ENCODE measurements at regions of chr9 and their contacts with region 1.

Region 1: GRCh38 chr9:5886114-5886939 is 4.4 kb upstream of the MLANA start:
- DNase-seq: peak; percentile 60 to 82 (median 63)
- H3K4me3 ChIP-seq: no peak overlapping the region
- H3K4me3 Mint-ChIP-seq: no peak overlapping the region
- H3K27ac ChIP-seq: no peak overlapping the region
- H3K27ac Mint-ChIP-seq: peak overlapping the region in 3 of 8 donors; percentile 47 to 81 (median 75)
- H3K4me1 ChIP-seq: peaks cover 8% of the 10 kb centered on the region
- H3K4me1 Mint-ChIP-seq: peaks cover 7 to 8% (median 8%) of the 10 kb centered on the region in 3 donors
- H3K27me3 ChIP-seq: no peaks in the 10 kb centered on the region
- H3K27me3 Mint-ChIP-seq: no peaks in the 10 kb centered on the region

Region 2: DNA sequence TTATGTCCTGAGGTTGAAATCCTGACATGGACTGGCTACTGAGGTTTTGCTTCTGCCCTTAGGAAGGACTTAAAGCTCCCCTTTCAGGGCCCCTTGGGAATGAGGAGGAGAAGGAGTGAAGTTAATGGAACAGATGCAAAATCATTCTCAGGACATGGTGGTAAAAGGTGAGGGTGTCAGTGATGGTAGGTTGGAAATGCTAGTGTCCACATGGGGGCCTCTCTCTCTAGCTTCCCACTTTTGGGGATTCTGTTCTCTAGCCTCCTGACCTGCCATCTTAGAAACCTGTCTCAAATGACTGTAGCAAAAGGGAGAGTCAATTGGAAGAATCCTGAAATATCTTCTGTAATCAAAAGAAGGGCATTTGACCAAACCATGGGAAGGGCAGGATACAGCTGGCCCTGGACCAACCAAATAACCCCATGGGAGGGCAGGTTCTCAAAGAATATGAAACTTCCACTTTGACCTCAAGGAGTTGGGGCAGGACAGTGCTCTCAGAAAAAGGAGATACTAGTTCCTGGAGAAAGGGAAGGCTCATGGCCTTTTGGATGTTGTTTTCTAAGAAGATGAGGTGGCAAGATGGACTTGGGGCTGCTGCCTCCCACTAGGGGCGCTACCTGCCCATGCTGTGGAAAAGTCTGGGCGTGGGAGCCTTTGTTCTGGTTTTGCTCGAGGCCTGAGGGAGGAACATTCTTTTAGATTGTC is 16.9 kb before region 1 on chr9:
- CTCF ChIA-PET with region 1: interaction called, 15 read pairs
- POLR2A ChIA-PET with region 1: no interaction called
- DNase-seq: no peak
- H3K4me3 ChIP-seq: no peak overlapping the region
- H3K4me3 Mint-ChIP-seq: no peak overlapping the region
- H3K27ac ChIP-seq: no peak overlapping the region
- H3K27ac Mint-ChIP-seq: peak overlapping the region in 2 of 8 donors; percentile 46 to 51
- H3K4me1 ChIP-seq: no peaks in the 10 kb centered on the region
- H3K4me1 Mint-ChIP-seq: peaks cover 10 to 28% (median 13%) of the 10 kb centered on the region in 3 donors
- H3K27me3 ChIP-seq: no peaks in the 10 kb centered on the region
- H3K27me3 Mint-ChIP-seq: no peaks in the 10 kb centered on the region

Region 3: DNA sequence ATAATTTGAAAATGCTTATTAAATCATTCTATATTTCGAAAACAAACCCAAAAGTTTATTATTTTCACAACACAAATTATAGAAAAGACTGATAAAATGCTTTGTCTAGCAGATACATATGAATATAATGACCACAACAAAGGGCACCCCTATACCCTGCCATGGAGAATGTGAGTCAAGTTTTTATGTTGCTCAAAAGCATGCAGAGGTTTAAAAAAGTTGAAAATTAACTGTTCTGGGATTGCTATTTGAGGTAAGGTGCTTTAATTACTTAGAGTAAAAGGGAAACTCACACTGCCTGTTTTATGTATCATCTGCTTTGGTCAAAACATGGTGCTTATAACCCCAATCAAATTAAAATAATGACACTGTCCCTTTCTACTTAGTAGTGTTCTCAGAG is 45.3 kb after region 1 on chr9:
- CTCF ChIA-PET with region 1: no interaction called
- POLR2A ChIA-PET with region 1: no interaction called
- DNase-seq: no peak
- H3K4me3 ChIP-seq: no peak overlapping the region
- H3K4me3 Mint-ChIP-seq: no peak overlapping the region
- H3K27ac ChIP-seq: no peak overlapping the region
- H3K27ac Mint-ChIP-seq: no peak overlapping the region
- H3K4me1 ChIP-seq: no peaks in the 10 kb centered on the region
- H3K4me1 Mint-ChIP-seq: no peaks in the 10 kb centered on the region
- H3K27me3 ChIP-seq: no peaks in the 10 kb centered on the region
- H3K27me3 Mint-ChIP-seq: no peaks in the 10 kb centered on the region

Region 4: GRCh38 chr9:5949103-5949699 is 62.9 kb after region 1 on chr9:
- CTCF ChIA-PET with region 1: no interaction called
- POLR2A ChIA-PET with region 1: no interaction called
- DNase-seq: peak in 4 of 5 donors; percentile 2 to 53 (median 20)
- H3K4me3 ChIP-seq: peak overlapping the region; percentile 16
- H3K4me3 Mint-ChIP-seq: peak overlapping the region; percentile 17 to 84 (median 74)
- H3K27ac ChIP-seq: no peak overlapping the region
- H3K27ac Mint-ChIP-seq: peak overlapping the region; percentile 56 to 89 (median 74)
- H3K4me1 ChIP-seq: peaks cover 9% of the 10 kb centered on the region
- H3K4me1 Mint-ChIP-seq: peaks cover 24 to 32% (median 27%) of the 10 kb centered on the region in 3 donors
- H3K27me3 ChIP-seq: no peaks in the 10 kb centered on the region
- H3K27me3 Mint-ChIP-seq: no peaks in the 10 kb centered on the region

Region 5: DNA sequence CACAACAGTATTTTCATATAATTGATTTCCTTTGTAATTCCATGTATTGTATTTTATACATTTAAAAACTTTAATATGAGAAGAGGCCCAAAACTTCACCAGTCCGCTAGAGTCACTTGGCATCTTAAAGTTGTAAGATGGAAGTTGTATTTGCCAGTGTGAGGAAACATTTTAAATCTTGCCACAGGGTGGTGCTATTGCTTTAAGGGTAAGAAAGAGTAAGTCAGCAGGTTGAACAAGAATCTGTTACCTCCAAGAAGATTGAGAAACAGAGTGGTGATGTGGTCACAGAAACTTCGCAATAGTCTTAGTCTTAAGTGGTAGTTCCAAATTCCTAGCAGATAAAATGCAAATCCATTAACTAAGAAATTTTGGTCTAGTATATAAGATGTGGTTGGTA is 168.9 kb after region 1 on chr9:
- CTCF ChIA-PET with region 1: interaction called, 36 read pairs
- POLR2A ChIA-PET with region 1: no interaction called
- DNase-seq: peak in 2 of 5 donors; percentile 46 to 50
- H3K4me3 ChIP-seq: no peak overlapping the region
- H3K4me3 Mint-ChIP-seq: no peak overlapping the region
- H3K27ac ChIP-seq: no peak overlapping the region
- H3K27ac Mint-ChIP-seq: peak overlapping the region in 1 of 8 donors; percentile 33
- H3K4me1 ChIP-seq: peaks cover 4% of the 10 kb centered on the region
- H3K4me1 Mint-ChIP-seq: peaks cover 0 to 4% (median under 1%) of the 10 kb centered on the region in 3 donors
- H3K27me3 ChIP-seq: no peaks in the 10 kb centered on the region
- H3K27me3 Mint-ChIP-seq: peaks cover 8 to 9% of the 10 kb centered on the region in 2 donors

Region 6: DNA sequence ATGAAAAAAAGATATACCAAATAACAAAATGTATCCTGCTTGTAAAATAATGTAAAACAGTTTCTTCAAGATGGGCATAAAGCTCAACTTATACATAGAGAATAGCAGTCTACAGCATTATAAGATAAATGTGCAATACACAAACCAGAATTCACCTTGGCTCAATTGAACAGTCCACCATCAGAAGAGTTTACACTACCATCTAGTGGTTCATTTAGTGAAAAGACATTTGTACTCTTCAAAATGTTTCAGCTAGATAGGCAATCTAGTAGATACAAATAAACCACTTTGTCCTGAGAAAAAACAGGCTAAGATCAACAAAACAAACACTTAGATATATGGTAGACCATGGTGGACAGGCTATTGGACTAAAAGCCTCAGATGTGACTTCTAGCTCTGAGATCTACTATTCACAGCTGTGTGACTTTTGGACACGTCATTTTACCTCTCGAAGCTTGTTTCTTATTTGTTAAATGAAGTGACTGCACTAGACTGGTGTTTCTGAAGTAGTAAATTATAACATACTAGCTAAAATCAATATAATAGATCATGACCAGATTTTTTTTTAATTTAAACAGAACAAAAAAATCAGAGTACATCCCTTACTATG is 419.7 kb after region 1 on chr9:
- CTCF ChIA-PET with region 1: interaction called, 12 read pairs
- POLR2A ChIA-PET with region 1: no interaction called
- DNase-seq: peak in 1 of 5 donors; percentile 5
- H3K4me3 ChIP-seq: no peak overlapping the region
- H3K4me3 Mint-ChIP-seq: no peak overlapping the region
- H3K27ac ChIP-seq: no peak overlapping the region
- H3K27ac Mint-ChIP-seq: no peak overlapping the region
- H3K4me1 ChIP-seq: no peaks in the 10 kb centered on the region
- H3K4me1 Mint-ChIP-seq: no peaks in the 10 kb centered on the region
- H3K27me3 ChIP-seq: peaks cover 3% of the 10 kb centered on the region
- H3K27me3 Mint-ChIP-seq: peaks cover 9 to 19% of the 10 kb centered on the region in 2 donors

Measured in CD8-positive, alpha-beta memory T cell (primary cell).